ENCODE measurements at regions of chr20 and their contacts with region 1.

Region 1: GRCh38 chr20:49323622-49324238 is 45.9 kb upstream of the ZNFX1 start:
- DNase-seq: no peak
- ATAC-seq: peak; percentile 25
- H3K4me3 Mint-ChIP-seq: no peak overlapping the region
- H3K27ac Mint-ChIP-seq: no peak overlapping the region
- H3K4me1 Mint-ChIP-seq: peaks cover 32% of the 10 kb centered on the region
- H3K27me3 Mint-ChIP-seq: peaks cover 21% of the 10 kb centered on the region
- CTCF ChIP-seq: no peak

Region 2: DNA sequence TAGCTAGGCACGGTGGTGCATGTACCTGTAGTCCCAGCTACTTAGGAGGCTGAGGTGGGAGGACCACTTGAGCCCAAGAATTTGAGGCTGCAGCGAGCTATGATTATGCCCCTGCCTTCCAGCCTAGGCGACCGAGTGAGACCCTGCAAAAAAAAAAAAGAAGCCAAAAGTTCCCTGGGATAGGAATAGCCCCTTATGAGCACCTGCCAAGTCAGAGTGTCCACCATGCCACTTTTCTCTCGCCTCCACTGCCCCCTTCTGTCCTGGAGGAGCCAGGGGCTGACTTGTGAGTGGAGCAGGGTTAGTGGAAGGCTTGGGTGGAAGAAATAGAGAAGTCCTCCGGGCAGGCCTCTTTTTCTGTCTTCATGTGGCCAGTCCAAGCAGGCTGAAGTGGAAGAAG is 116.7 kb before region 1 on chr20:
- CTCF ChIA-PET with region 1: no interaction called
- POLR2A ChIA-PET with region 1: no interaction called
- DNase-seq: peak; percentile 53
- ATAC-seq: peak; percentile 96
- H3K4me3 Mint-ChIP-seq: no peak overlapping the region
- H3K27ac Mint-ChIP-seq: no peak overlapping the region
- H3K4me1 Mint-ChIP-seq: no peaks in the 10 kb centered on the region
- H3K27me3 Mint-ChIP-seq: no peaks in the 10 kb centered on the region
- CTCF ChIP-seq: no peak

Region 3: DNA sequence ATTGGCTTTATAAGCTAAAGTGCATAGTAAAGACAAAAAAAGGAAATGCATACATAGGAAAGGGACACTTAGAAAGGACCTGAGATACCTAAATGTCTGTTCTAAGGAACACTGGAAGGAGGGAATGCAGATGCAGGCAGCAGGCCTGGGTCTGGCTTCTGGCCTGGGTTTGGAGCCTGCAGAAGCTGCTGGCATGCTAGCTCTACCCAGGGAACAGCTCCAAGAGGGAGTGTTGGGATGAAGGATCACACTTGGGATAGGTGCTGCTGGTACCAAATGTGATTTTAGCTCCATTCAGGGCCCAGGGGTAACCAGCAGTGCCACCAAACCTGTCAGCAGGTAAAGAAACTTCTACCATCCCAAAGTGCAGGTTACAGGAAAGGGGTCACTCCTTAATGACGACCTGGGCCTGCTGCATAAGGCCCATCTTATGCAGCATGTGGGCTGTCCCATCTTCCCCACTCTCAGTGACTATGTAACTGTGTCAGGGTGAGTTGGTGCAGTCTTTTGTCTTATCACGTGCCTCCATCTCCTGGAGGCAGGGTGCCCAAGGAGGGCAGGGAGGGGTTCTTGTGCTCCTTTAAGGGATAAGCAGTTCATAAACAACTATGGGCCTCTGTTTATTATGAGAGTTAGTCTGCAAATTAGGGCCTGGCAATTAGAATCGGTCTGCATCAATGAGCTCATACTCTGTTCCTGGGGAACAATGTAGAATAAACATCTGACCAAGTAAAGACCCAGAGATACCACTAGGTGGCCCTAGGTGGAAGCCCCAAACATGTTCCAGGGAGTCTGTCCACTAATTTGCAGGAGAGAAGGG is 77.6 kb before region 1 on chr20:
- CTCF ChIA-PET with region 1: interaction called, 47 read pairs
- POLR2A ChIA-PET with region 1: no interaction called
- DNase-seq: no peak
- ATAC-seq: peak; percentile 93
- H3K4me3 Mint-ChIP-seq: no peak overlapping the region
- H3K27ac Mint-ChIP-seq: peak overlapping the region; percentile 87
- H3K4me1 Mint-ChIP-seq: no peaks in the 10 kb centered on the region
- H3K27me3 Mint-ChIP-seq: no peaks in the 10 kb centered on the region
- CTCF ChIP-seq: peak; percentile 76

Region 4: GRCh38 chr20:49276161-49276960 is 47.4 kb before region 1 on chr20:
- CTCF ChIA-PET with region 1: interaction called, 15 read pairs
- POLR2A ChIA-PET with region 1: no interaction called
- DNase-seq: no peak
- ATAC-seq: no peak
- H3K4me3 Mint-ChIP-seq: peak overlapping the region; percentile 100
- H3K27ac Mint-ChIP-seq: peak overlapping the region; percentile 46; the same call in 1 of the 2 replicates
- H3K4me1 Mint-ChIP-seq: peaks cover 23% of the 10 kb centered on the region
- H3K27me3 Mint-ChIP-seq: no peaks in the 10 kb centered on the region; the same call in 1 of the 2 replicates
- CTCF ChIP-seq: no peak

Region 5: DNA sequence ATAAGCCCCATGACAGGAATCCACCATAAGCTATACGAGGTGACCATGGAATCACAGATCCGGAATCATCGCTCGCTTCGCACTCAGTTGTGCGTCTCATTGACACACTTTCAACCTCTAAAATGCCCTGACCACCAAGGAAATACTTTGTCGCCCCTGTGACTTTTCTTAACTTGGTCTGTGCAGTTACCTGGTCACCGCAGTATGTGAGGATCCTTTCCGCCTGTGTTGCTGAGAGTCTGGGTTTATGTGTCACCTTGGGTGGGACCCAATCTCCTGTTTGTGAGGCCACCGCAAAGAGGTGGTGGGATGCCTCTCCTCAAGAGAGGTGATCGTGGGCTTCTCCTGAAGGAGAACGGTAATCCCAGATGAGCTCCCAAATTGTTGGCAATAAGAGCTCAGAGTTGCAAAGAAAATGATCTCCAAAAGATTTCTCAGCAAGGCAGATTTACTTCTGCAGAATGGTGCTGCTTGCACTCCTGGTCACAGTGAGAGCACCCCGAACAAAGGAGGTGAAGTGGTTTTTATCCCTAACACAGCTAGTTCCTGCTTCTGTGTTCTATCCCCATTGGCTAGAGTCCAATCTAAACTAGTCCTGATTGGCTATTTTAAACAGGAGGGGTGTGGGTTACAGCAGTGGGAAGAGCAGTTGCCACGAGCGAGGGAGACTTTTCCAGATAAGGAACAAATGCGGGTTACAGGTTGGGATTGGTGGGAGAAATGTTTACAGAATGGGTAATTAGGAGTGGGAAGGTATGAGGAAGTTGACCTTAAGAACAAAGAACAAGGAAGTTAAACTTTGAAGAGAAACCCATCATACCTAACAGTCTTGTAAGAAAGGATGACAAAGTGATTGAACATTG is 36.8 kb before region 1 on chr20:
- CTCF ChIA-PET with region 1: interaction called, 40 read pairs
- POLR2A ChIA-PET with region 1: interaction called, 6 read pairs
- DNase-seq: no peak
- ATAC-seq: no peak
- H3K4me3 Mint-ChIP-seq: peak overlapping the region; percentile 100
- H3K27ac Mint-ChIP-seq: peak overlapping the region; percentile 88
- H3K4me1 Mint-ChIP-seq: peaks cover 81% of the 10 kb centered on the region
- H3K27me3 Mint-ChIP-seq: no peaks in the 10 kb centered on the region
- CTCF ChIP-seq: no peak

Region 6: DNA sequence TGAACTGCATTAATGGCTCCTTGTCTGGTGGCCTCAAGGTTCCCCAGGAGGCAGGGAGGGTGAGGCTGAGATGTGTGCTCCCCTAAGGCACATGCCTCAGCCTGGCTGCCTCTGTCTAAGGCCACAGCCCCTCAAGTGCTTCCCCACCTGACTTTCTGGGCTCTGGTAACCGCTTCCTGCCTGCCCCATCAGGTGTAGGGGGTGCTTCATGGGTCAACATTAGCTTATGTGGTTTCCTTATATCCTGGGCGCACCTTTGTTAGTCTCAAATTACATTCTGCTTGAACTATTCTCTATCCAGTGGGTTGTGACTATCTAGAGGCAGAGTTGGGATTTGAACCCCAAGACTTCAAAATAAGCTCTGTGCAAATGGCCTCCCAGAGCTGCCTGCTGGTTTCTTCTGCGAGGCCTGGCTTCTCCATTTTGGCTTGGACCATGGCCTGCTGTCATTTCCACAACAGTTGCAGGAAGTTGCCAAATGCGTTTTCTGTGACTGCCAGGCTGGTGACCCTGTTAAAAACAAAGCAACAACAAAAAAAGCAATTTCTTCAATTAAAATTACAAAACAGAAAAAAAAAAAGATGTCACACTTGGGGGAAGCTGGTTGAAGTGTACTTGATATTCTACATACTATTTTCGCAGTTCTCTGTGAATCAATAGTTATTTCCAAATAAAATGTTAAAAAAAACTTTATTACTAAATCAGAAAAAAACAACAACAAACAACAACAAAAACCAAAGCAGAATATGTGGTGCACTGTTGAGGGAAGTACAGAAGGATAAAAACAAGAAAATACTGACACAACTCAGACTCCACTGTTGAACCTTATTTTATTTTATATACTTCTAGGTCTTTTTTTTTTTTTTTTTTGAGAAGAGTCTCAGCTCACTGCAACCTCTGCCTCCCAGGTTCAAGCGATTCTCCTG is 25.9 kb before region 1 on chr20:
- CTCF ChIA-PET with region 1: interaction called, 40 read pairs
- POLR2A ChIA-PET with region 1: interaction called, 5 read pairs
- DNase-seq: no peak
- ATAC-seq: peak; percentile 11; the same call in 1 of the 2 replicates
- H3K4me3 Mint-ChIP-seq: no peak overlapping the region
- H3K27ac Mint-ChIP-seq: peak overlapping the region; percentile 97
- H3K4me1 Mint-ChIP-seq: peaks cover 33% of the 10 kb centered on the region
- H3K27me3 Mint-ChIP-seq: no peaks in the 10 kb centered on the region; the same call in 1 of the 2 replicates
- CTCF ChIP-seq: no peak

Region 7: DNA sequence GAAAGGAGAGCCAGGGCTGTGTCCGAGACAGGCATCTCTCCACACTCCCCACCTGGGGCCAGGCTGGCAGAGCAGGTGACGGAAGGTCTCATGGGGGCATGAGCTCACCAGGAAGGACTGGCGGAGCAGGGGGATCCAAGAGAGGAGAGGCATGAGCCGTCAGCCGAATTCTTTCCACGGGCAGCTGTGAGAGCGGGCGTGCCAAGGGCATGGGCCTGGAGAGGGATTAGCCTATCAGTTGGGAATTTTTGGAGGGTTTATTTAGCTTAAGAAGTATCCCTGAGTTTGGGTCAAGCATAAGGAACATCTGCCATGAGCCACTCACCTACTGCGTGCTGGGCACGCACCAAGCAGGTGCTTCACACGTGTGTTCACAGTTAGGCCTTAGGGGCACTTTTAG is 14.3 kb after region 1 on chr20:
- CTCF ChIA-PET with region 1: interaction called, 11 read pairs
- POLR2A ChIA-PET with region 1: no interaction called
- DNase-seq: no peak
- ATAC-seq: no peak
- H3K4me3 Mint-ChIP-seq: no peak overlapping the region
- H3K27ac Mint-ChIP-seq: no peak overlapping the region
- H3K4me1 Mint-ChIP-seq: no peaks in the 10 kb centered on the region
- H3K27me3 Mint-ChIP-seq: 0 out of 2 replicates have a peak, but pooled peaks cover under 1% of the 10 kb centered on the region
- CTCF ChIP-seq: no peak

Region 8: GRCh38 chr20:49508435-49509199 is 184.9 kb after region 1 on chr20:
- CTCF ChIA-PET with region 1: interaction called, 10 read pairs
- POLR2A ChIA-PET with region 1: no interaction called
- DNase-seq: no peak
- ATAC-seq: peak; percentile 75
- H3K4me3 Mint-ChIP-seq: no peak overlapping the region
- H3K27ac Mint-ChIP-seq: no peak overlapping the region
- H3K4me1 Mint-ChIP-seq: 0 out of 2 replicates have a peak, but pooled peaks cover under 1% of the 10 kb centered on the region
- H3K27me3 Mint-ChIP-seq: no peaks in the 10 kb centered on the region
- CTCF ChIP-seq: peak; percentile 43

Measured in WTC11 (cell line).